ENCODE measurements at regions of chr12 and their contacts with region 1.

Region 1: GRCh38 chr12:106113042-106113441 is 25.7 kb downstream of the NUAK1 start:
- DNase-seq: peak; percentile 71
- H3K4me3 ChIP-seq: peak overlapping the region in 1 of 3 experiments; percentile 4
- H3K27ac ChIP-seq: peak overlapping the region; percentile 97
- H3K4me1 ChIP-seq: peaks cover 47% of the 10 kb centered on the region
- H3K27me3 ChIP-seq: no peaks in the 10 kb centered on the region
- CTCF ChIP-seq: no peak

Region 2: GRCh38 chr12:105831372-105831771 is 281.7 kb before region 1 on chr12:
- CTCF ChIA-PET with region 1: no interaction called
- dilution Hi-C with region 1: loop called (anchors 10 kb)
- in situ Hi-C with region 1: no loop called
- intact Hi-C with region 1: no loop called
- DNase-seq: no peak
- H3K4me3 ChIP-seq: no peak overlapping the region
- H3K27ac ChIP-seq: no peak overlapping the region
- H3K4me1 ChIP-seq: peaks cover 4% of the 10 kb centered on the region
- H3K27me3 ChIP-seq: no peaks in the 10 kb centered on the region
- CTCF ChIP-seq: no peak

Region 3: GRCh38 chr12:105934274-105934673 is 178.8 kb before region 1 on chr12:
- CTCF ChIA-PET with region 1: no interaction called
- dilution Hi-C with region 1: no loop called
- in situ Hi-C with region 1: no loop called
- intact Hi-C with region 1: loop called (anchors 5 kb)
- DNase-seq: peak; percentile 95
- H3K4me3 ChIP-seq: peak overlapping the region in 1 of 3 experiments; percentile 29
- H3K27ac ChIP-seq: peak overlapping the region; percentile 78
- H3K4me1 ChIP-seq: peaks cover 71% of the 10 kb centered on the region
- H3K27me3 ChIP-seq: no peaks in the 10 kb centered on the region
- CTCF ChIP-seq: no peak

Region 4: GRCh38 chr12:105983622-105984320 is 129.3 kb before region 1 on chr12:
- CTCF ChIA-PET with region 1: no interaction called
- dilution Hi-C with region 1: no loop called
- in situ Hi-C with region 1: no loop called
- intact Hi-C with region 1: loop called (anchors 5 kb)
- DNase-seq: peak; percentile 98
- H3K4me3 ChIP-seq: no peak overlapping the region
- H3K27ac ChIP-seq: peak overlapping the region; percentile 66
- H3K4me1 ChIP-seq: peaks cover 26% of the 10 kb centered on the region
- H3K27me3 ChIP-seq: no peaks in the 10 kb centered on the region
- CTCF ChIP-seq: no peak

Region 5: DNA sequence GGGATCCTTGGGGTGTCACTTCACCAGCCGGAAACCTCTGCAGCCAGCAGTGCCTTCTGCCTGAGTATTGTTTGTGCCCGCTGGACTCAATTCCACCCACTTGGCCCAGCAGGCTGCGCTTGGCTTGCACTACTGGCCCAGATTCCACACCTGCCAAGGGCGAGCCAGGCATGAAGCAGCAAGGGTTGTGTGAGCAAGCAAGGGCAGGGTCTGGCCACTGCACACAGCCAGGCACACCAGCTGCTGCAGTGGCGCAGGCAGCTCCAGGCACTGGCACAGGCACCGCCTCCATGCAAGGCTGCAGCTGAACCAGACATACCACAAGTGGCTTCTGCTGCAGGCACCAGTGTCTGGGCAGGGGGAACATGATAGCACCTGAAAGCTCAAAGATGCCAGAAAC is 73.8 kb before region 1 on chr12:
- CTCF ChIA-PET with region 1: no interaction called
- dilution Hi-C with region 1: no loop called
- in situ Hi-C with region 1: no loop called
- intact Hi-C with region 1: no loop called
- DNase-seq: no peak
- H3K4me3 ChIP-seq: no peak overlapping the region
- H3K27ac ChIP-seq: no peak overlapping the region
- H3K4me1 ChIP-seq: no peaks in the 10 kb centered on the region
- H3K27me3 ChIP-seq: no peaks in the 10 kb centered on the region
- CTCF ChIP-seq: no peak

Region 6: GRCh38 chr12:106078358-106079010 is 34.6 kb before region 1 on chr12:
- CTCF ChIA-PET with region 1: interaction called, 3 read pairs
- dilution Hi-C with region 1: no loop called
- in situ Hi-C with region 1: no loop called
- intact Hi-C with region 1: loop called (anchors 2 kb)
- DNase-seq: peak; percentile 73
- H3K4me3 ChIP-seq: no peak overlapping the region
- H3K27ac ChIP-seq: no peak overlapping the region
- H3K4me1 ChIP-seq: peaks cover 10% of the 10 kb centered on the region
- H3K27me3 ChIP-seq: no peaks in the 10 kb centered on the region
- CTCF ChIP-seq: no peak

Region 7: GRCh38 chr12:106126441-106127337 is 13.6 kb after region 1 on chr12:
- CTCF ChIA-PET with region 1: no interaction called
- dilution Hi-C with region 1: no loop called
- in situ Hi-C with region 1: no loop called
- intact Hi-C with region 1: loop called (anchors 2 kb)
- DNase-seq: peak; percentile 58
- H3K4me3 ChIP-seq: no peak overlapping the region
- H3K27ac ChIP-seq: no peak overlapping the region
- H3K4me1 ChIP-seq: peaks cover 11% of the 10 kb centered on the region
- H3K27me3 ChIP-seq: no peaks in the 10 kb centered on the region
- CTCF ChIP-seq: no peak